ENCODE measurements at regions of chr3 and their contacts with region 1.

Region 1: GRCh38 chr3:113035387-113035982 is 44.7 kb downstream of the GTPBP8 start:
- DNase-seq: peak; percentile 64 to 73
- ATAC-seq: peak; percentile 99 to 100
- H3K4me3 ChIP-seq: no peak overlapping the region
- H3K27ac ChIP-seq: no peak overlapping the region
- H3K4me1 ChIP-seq: no peaks in the 10 kb centered on the region
- CTCF ChIP-seq: peak; percentile 74
- EP300 ChIP-seq: no peak
- POLR2A ChIP-seq: no peak
- RAD21 ChIP-seq: peak; percentile 62 to 73

Region 2: DNA sequence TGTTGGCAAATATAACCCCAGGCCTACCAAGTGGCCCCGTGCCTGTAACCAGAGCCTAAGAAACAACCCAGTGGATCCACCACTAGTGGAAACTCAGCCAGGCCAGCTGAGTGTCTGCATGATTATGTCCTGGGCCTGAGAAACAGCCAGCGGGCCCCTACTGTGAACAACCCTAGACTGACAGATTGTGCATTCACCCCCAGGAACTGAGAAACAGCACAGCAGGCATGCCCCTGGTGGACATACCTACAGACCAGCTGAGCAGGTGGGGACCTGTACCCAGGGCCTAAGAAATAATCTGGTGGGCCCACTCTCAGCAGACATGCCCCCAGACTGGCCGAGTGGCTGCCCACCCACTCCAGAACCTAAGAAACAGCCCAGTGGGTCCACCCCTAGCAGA is 102.6 kb before region 1 on chr3:
- CTCF ChIA-PET with region 1: no interaction called
- POLR2A ChIA-PET with region 1: no interaction called
- DNase-seq: no peak
- ATAC-seq: no peak
- H3K4me3 ChIP-seq: no peak overlapping the region
- H3K27ac ChIP-seq: no peak overlapping the region
- H3K4me1 ChIP-seq: no peaks in the 10 kb centered on the region
- CTCF ChIP-seq: no peak
- EP300 ChIP-seq: no peak
- POLR2A ChIP-seq: no peak
- RAD21 ChIP-seq: no peak

Region 3: GRCh38 chr3:113626503-113627371 is 591.3 kb after region 1 on chr3:
- CTCF ChIA-PET with region 1: interaction called, 10 read pairs
- POLR2A ChIA-PET with region 1: no interaction called
- DNase-seq: peak; percentile 72 to 82
- ATAC-seq: peak; percentile 94 to 99
- H3K4me3 ChIP-seq: no peak overlapping the region
- H3K27ac ChIP-seq: no peak overlapping the region
- H3K4me1 ChIP-seq: no peaks in the 10 kb centered on the region
- CTCF ChIP-seq: peak; percentile 98
- EP300 ChIP-seq: no peak
- POLR2A ChIP-seq: no peak
- RAD21 ChIP-seq: peak; percentile 97

Measured in A549 (cell line).